ENCODE measurements at regions of chr13 and their contacts with region 1.

Region 1: DNA sequence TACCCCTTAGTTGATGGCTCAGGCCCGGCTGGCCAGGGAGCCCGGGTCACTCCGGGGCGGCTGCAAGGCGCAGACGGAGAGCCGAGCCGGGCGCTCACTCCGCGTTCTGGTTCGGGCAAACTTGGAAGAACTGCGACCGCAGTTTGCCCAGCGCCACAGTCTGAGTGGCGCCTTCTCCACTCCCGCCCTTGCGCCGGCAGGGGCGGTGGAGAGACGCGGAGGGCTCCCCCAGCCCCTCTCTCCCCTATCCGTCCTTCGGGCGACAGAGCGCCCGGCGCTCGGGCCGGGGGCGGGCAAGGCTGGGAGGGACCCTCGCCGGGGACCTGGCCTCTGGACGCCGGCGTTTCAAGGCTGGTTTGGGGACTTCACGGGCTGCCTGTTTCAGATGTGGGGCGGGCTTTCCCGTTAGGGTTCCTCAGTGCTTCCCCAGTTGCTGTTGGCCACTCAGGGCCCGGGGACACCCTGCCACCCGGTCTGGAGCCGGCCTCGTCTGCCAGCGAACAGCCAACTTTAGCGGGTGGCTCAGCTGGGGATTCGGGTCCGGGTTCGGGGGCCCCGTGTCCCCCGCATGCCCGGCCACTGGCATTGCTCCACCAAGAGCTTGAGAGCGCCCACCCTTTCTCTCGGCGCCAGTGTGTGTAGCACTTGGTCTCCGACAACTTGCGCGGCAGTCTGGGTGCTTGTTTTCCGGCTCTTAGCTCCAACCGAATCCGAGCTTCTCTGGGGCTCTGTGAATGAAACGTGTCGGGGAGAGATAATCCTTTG is 1.5 kb downstream of the GPC6 start:
- DNase-seq: peak in 1 of 2 experiments; percentile 86
- H3K4me3 ChIP-seq: peak overlapping the region; percentile 81 to 89 (median 84)
- H3K27ac ChIP-seq: no peak overlapping the region; the same call in 1 of the 2 replicates
- H3K4me1 ChIP-seq: peaks cover 0 to 12% (median 11%) of the 10 kb centered on the region in 4 experiments; a peak in 6 of 7 replicates
- H3K27me3 ChIP-seq: no peaks in the 10 kb centered on the region
- CTCF ChIP-seq: peak; percentile 60 to 71 (median 64)
- EP300 ChIP-seq: no peak
- POLR2A ChIP-seq: no peak; a peak in 1 of 3 replicates
- RAD21 ChIP-seq: peak; percentile 62 to 67

Region 2: GRCh38 chr13:93201992-93202558 is 26.0 kb before region 1 on chr13:
- CTCF ChIA-PET with region 1: no interaction called
- POLR2A ChIA-PET with region 1: no interaction called
- DNase-seq: no peak
- H3K4me3 ChIP-seq: no peak overlapping the region
- H3K27ac ChIP-seq: no peak overlapping the region
- H3K4me1 ChIP-seq: 0 out of 7 replicates have a peak, but pooled peaks cover 0 to 2% (median 0%) of the 10 kb centered on the region in 4 experiments
- H3K27me3 ChIP-seq: no peaks in the 10 kb centered on the region
- CTCF ChIP-seq: no peak
- EP300 ChIP-seq: no peak
- POLR2A ChIP-seq: no peak
- RAD21 ChIP-seq: no peak

Region 3: DNA sequence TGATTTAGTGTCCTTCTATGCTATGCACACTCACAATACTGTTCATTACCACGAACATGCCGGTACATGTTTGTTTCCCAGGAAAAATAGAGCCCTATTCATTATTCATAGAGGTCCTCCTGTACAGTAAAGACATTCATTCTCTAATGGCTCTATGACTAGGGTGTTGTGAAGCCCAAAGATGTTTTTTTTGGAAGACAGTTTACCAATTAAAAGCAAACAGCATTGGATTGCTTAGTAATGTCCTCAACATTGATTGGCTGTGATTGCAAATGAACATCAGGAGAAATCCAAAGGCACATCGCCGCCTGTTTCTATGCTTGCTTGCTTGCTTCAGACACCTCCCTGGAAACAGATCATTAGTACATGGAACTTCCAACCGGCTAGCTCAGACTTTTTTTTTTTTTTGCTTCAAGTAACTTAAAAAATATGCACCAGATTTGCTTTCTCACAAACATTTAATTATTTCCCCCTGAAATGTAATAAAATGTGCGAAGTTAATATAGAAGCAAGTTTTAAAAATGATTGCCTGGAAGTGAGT is 10.3 kb before region 1 on chr13:
- CTCF ChIA-PET with region 1: interaction called, 5 read pairs
- POLR2A ChIA-PET with region 1: interaction called, 23 read pairs
- DNase-seq: no peak
- H3K4me3 ChIP-seq: no peak overlapping the region
- H3K27ac ChIP-seq: no peak overlapping the region
- H3K4me1 ChIP-seq: peaks cover 0 to 7% (median 3%) of the 10 kb centered on the region in 4 experiments; a peak in 4 of 7 replicates
- H3K27me3 ChIP-seq: no peaks in the 10 kb centered on the region
- CTCF ChIP-seq: no peak
- EP300 ChIP-seq: no peak
- POLR2A ChIP-seq: no peak
- RAD21 ChIP-seq: no peak

Region 4: DNA sequence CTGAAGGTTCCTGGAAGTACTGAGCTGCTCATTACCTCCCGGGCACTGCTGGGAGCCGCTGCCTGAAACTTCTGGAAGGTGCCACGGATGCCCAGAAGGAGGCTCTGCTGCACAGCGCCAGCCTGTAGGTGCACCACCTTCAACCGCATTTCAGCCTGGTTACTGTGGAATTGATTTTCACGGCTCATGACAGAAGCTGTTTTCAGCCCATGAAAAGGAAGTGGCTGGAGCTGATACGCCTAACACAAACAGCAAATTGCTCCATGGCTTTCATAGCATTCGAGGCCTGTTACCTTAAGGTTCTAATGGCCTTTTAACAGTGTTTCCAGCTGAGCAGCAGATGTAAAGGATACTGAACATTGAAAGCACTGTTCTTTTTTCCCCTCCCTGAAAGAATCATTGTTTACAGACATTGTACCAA is 20.6 kb after region 1 on chr13:
- CTCF ChIA-PET with region 1: interaction called, 11 read pairs
- POLR2A ChIA-PET with region 1: interaction called, 4 read pairs
- DNase-seq: no peak
- H3K4me3 ChIP-seq: no peak overlapping the region
- H3K27ac ChIP-seq: no peak overlapping the region
- H3K4me1 ChIP-seq: peaks cover 8 to 23% (median 13%) of the 10 kb centered on the region in 4 experiments
- H3K27me3 ChIP-seq: no peaks in the 10 kb centered on the region
- CTCF ChIP-seq: peak; percentile 73 to 84 (median 84)
- EP300 ChIP-seq: no peak
- POLR2A ChIP-seq: no peak
- RAD21 ChIP-seq: peak; percentile 90 to 96